Posterior vena cava (tissue), 2 donors: ENCODE measurements at regions of chr3 and their contacts with region 1.

Region 1: GRCh38 chr3:46663591-46664135 is 29.8 kb downstream of the ALS2CL start:
- DNase-seq: no peak

Region 2: GRCh38 chr3:45793482-45794176 is 870.0 kb before region 1 on chr3:
- intact Hi-C with region 1: no loop called
- DNase-seq: no peak

Region 3: GRCh38 chr3:46607603-46608028 is 56.0 kb before region 1 on chr3:
- intact Hi-C with region 1: no loop called
- DNase-seq: no peak

Region 4: GRCh38 chr3:46733026-46733800 is 69.5 kb after region 1 on chr3:
- intact Hi-C with region 1: loop called in 1 of 2 experiments (anchors 2 kb)
- DNase-seq: peak; percentile 47